ENCODE measurements at regions of chr14 and their contacts with region 1.

Region 1: GRCh38 chr14:64387694-64388532 is at the start of gene MTHFD1:
- DNase-seq: peak; percentile 98
- H3K4me3 Mint-ChIP-seq: peak within 1 kb of the TSS; percentile 85
- H3K27ac Mint-ChIP-seq: peak within 1 kb of the TSS; percentile 87
- H3K4me1 Mint-ChIP-seq: peaks cover 42% of the 10 kb centered on the region
- H3K27me3 Mint-ChIP-seq: no peaks in the 10 kb centered on the region
- total RNA-seq, gene MTHFD1: 142 to 147 TPM

Region 2: DNA sequence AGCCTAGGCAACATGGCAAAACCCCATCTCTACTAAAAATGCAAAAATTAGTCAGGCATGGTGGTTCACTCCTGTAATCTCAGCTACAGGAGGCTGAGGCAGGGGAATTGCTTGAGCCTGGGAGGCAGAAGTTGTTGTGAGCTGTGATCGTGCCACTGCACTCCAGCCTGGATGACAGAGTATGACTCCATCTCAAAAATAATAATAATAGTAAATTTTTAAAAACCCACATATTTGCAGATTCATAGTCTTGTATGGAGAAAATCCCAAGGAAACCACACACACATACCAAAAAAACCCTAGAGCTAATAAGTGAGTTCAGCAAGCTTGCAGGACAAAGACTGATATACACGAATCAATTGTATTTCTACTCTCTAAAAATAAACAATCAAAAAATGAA is 18.7 kb before region 1 on chr14:
- CTCF ChIA-PET with region 1: interaction called, 10 read pairs
- POLR2A ChIA-PET with region 1: interaction called, 12 read pairs
- DNase-seq: no peak
- H3K4me3 Mint-ChIP-seq: no peak overlapping the region
- H3K27ac Mint-ChIP-seq: no peak overlapping the region
- H3K4me1 Mint-ChIP-seq: peaks cover 3% of the 10 kb centered on the region
- H3K27me3 Mint-ChIP-seq: no peaks in the 10 kb centered on the region

Region 3: DNA sequence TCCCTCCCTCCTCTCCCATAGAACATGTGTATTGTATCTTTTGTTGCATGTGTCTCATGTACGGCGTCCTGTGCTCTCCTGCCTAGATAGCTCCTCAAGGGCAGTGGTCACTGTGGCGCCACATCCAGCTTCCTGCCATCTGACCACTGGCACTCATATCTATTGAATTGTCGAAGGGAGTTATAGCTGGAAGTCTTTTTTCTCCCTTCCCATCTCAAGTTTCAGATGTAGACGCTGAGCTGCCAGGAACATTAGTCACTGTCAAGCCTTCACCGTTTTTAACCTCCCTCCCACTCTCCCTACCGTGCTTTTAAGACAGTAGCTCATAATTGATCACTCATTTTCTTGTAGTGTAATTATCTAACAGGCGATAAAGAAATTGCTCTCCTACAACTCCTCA is 33.3 kb after region 1 on chr14:
- CTCF ChIA-PET with region 1: no interaction called
- POLR2A ChIA-PET with region 1: interaction called, 15 read pairs
- DNase-seq: no peak
- H3K4me3 Mint-ChIP-seq: no peak overlapping the region
- H3K27ac Mint-ChIP-seq: no peak overlapping the region
- H3K4me1 Mint-ChIP-seq: peaks cover 34% of the 10 kb centered on the region
- H3K27me3 Mint-ChIP-seq: no peaks in the 10 kb centered on the region

Region 4: DNA sequence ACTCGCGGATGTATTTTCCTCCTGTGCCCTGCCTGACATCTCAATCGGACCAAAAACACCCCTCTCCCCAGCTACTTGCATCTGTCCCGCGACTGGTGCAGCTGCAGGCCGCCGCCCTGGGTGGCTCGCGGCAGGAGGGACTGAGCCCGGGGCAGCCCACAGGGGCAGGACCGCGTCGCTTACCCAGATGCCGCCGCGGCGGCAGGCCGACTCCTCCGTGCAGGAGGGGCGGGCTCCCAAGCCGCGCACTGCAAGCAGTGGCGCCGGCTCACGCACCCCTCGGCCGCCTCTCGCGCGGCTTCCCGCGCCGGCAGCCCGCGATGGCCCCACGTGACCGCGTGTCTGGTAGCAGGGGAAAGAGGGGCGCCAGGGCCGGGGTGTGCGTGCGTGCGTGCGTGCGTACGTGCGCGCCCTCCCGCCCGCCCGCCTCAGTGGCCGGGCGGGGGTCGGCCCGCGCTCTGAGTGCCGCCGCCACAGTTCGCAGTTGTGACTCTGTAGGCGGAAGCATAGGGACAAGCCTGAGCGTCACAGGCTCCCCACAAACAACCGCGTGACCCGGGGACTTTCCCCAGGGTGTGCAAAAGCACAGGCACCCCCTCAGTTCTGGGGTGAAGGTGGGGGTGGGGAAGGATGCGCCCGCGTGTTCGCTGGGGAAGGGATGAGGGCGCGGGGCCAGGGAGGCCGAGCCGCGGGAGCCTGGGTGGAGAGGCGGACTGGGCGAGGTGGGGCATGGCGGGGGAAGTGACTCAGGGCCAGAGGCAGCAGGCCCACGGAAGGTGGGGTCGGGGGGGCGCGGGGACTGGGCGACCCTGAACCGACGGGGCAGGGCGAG is 115.8 kb after region 1 on chr14 and contains the start of gene ZBTB25:
- CTCF ChIA-PET with region 1: interaction called, 3 read pairs
- POLR2A ChIA-PET with region 1: interaction called, 75 read pairs
- DNase-seq: peak; percentile 97
- H3K4me3 Mint-ChIP-seq: peak within 1 kb of the TSS; percentile 94
- H3K27ac Mint-ChIP-seq: peak within 1 kb of the TSS; percentile 100
- H3K4me1 Mint-ChIP-seq: peaks cover 48% of the 10 kb centered on the region
- H3K27me3 Mint-ChIP-seq: no peaks in the 10 kb centered on the region
- total RNA-seq, gene ZBTB25: 38.8 to 40.5 TPM

Measured in activated CD4-positive, alpha-beta memory T cell treated with anti-CD3 and anti-CD28 coated beads, Interleukin-2, amount 10 ng/mL, durations not matched to agents 7 days and 5 days (primary cell).